Endothelial cell of umbilical vein (primary cell): ENCODE measurements at regions of chr6 and their contacts with region 1.

Region 1: DNA sequence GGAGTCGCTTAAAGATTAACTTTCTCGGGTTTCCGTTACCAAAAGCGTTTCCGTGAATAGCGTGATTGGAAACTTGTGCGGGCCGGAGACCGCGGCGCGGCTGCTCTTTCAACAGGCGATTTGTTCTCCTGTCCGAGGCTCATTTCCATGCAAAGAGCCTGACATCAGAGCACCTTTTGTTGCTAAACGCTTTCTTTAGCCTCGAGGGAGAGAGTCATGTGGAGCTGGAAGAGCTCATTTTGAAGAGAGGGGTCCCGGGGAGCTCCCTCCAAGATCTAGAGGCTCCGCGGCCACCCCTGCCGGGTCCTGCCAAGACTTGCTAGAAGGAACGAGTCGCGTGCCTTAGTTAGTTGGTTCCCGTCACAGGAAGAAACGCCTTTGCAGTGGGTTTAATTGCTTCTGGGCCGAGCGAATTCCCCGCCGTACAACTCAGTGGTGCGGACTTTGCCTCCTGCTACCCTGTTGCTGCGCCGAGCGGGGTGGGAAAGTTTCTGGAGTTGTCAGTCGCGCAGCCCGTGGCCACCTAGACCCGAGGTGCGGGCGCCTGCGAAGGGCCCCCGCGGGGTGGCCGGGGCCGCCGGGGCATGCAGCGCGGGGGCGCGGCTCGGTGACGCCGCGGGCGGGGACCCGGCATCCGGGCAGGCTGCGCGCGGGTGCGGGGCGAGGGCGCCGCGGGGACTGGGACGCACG is at the start of gene SASH1:
- DNase-seq: peak; percentile 89
- H3K4me3 ChIP-seq: peak within 1 kb of the TSS; percentile 69 to 97 (median 96)
- H3K27ac ChIP-seq: peak within 1 kb of the TSS; percentile 94
- H3K4me1 ChIP-seq: peaks cover 53% of the 10 kb centered on the region
- H3K27me3 ChIP-seq: no peaks in the 10 kb centered on the region
- CTCF ChIP-seq: no peak
- POLR2A ChIP-seq: no peak
- total RNA-seq, gene SASH1: 97.5 and 103 TPM in 2 replicates

Region 2: GRCh38 chr6:148250975-148251685 is 91.4 kb before region 1 on chr6:
- CTCF ChIA-PET with region 1: no interaction called
- POLR2A ChIA-PET with region 1: no interaction called
- dilution Hi-C with region 1: no loop called
- intact Hi-C with region 1: loop called (anchors 5 kb)
- DNase-seq: peak; percentile 42
- H3K4me3 ChIP-seq: no peak overlapping the region
- H3K27ac ChIP-seq: no peak overlapping the region
- H3K4me1 ChIP-seq: no peaks in the 10 kb centered on the region
- H3K27me3 ChIP-seq: no peaks in the 10 kb centered on the region
- CTCF ChIP-seq: peak in 1 of 2 donors; percentile 16
- POLR2A ChIP-seq: no peak

Region 3: DNA sequence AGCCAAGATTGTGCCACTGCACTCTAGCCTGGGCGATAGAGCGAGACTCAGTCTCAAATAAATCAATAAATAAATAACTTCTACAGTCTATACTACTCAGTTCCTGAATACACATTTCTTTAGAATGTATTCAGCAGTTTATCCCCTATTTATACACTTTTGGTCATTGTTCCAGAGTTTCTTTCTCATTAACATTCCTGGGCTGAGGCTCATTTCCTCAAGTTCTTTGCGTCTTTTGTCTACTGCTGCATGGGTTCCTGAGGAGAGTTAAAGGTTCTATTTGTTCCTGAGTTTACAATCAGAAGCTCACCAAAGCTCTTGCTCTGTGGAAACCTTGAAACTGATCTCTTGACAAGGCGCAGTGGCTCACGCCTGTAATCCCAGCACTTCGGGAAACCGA is 37.5 kb before region 1 on chr6:
- CTCF ChIA-PET with region 1: interaction called, 3 read pairs
- POLR2A ChIA-PET with region 1: interaction called, 4 read pairs
- dilution Hi-C with region 1: no loop called
- intact Hi-C with region 1: loop called (anchors 1 kb)
- DNase-seq: peak; percentile 97
- H3K4me3 ChIP-seq: no peak overlapping the region
- H3K27ac ChIP-seq: peak overlapping the region; percentile 95
- H3K4me1 ChIP-seq: peaks cover 24% of the 10 kb centered on the region
- H3K27me3 ChIP-seq: no peaks in the 10 kb centered on the region
- CTCF ChIP-seq: no peak
- POLR2A ChIP-seq: no peak

Region 4: GRCh38 chr6:148329596-148330381 is 12.7 kb before region 1 on chr6:
- CTCF ChIA-PET with region 1: interaction called, 5 read pairs
- POLR2A ChIA-PET with region 1: no interaction called
- dilution Hi-C with region 1: no loop called
- intact Hi-C with region 1: loop called (anchors 1 kb)
- DNase-seq: peak; percentile 83
- H3K4me3 ChIP-seq: no peak overlapping the region
- H3K27ac ChIP-seq: peak overlapping the region; percentile 46
- H3K4me1 ChIP-seq: peaks cover 31% of the 10 kb centered on the region
- H3K27me3 ChIP-seq: no peaks in the 10 kb centered on the region
- CTCF ChIP-seq: no peak
- POLR2A ChIP-seq: no peak

Region 5: GRCh38 chr6:148398244-148398643 is 55.7 kb after region 1 on chr6:
- CTCF ChIA-PET with region 1: no interaction called
- POLR2A ChIA-PET with region 1: interaction called, 3 read pairs
- dilution Hi-C with region 1: no loop called
- intact Hi-C with region 1: loop called (anchors 1 kb)
- DNase-seq: peak; percentile 95
- H3K4me3 ChIP-seq: peak overlapping the region in 1 of 3 experiments; percentile 3
- H3K27ac ChIP-seq: peak overlapping the region; percentile 98
- H3K4me1 ChIP-seq: peaks cover 41% of the 10 kb centered on the region
- H3K27me3 ChIP-seq: no peaks in the 10 kb centered on the region
- CTCF ChIP-seq: no peak
- POLR2A ChIP-seq: peak; percentile 52

Region 6: DNA sequence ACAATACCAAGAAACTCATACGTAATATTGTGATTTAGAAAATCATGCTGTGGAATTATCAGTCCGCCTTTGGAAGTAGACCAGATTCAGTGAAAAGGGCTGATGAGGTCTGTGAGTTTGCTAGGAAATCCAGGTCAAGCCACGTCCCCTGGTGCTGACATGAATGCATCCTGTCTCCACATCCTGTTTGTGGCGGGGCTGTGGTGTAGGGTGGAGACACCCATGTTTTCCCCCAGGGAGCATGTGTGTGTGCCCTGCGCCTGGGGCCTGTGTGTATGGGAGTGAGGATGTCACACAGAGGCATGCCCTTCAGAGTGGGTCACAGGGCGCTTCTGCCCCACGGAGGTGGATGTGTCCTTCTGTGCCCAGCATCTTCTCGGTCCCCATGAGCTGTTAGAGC is 109.2 kb after region 1 on chr6:
- CTCF ChIA-PET with region 1: interaction called, 4 read pairs
- POLR2A ChIA-PET with region 1: no interaction called
- dilution Hi-C with region 1: no loop called
- intact Hi-C with region 1: loop called (anchors 2 kb)
- DNase-seq: no peak
- H3K4me3 ChIP-seq: no peak overlapping the region
- H3K27ac ChIP-seq: peak overlapping the region; percentile 61
- H3K4me1 ChIP-seq: peaks cover 85% of the 10 kb centered on the region
- H3K27me3 ChIP-seq: no peaks in the 10 kb centered on the region
- CTCF ChIP-seq: no peak
- POLR2A ChIP-seq: peak; percentile 37